CD4-positive, alpha-beta T cell (primary cell): ENCODE measurements at regions of chr5 and their contacts with region 1.

Region 1: DNA sequence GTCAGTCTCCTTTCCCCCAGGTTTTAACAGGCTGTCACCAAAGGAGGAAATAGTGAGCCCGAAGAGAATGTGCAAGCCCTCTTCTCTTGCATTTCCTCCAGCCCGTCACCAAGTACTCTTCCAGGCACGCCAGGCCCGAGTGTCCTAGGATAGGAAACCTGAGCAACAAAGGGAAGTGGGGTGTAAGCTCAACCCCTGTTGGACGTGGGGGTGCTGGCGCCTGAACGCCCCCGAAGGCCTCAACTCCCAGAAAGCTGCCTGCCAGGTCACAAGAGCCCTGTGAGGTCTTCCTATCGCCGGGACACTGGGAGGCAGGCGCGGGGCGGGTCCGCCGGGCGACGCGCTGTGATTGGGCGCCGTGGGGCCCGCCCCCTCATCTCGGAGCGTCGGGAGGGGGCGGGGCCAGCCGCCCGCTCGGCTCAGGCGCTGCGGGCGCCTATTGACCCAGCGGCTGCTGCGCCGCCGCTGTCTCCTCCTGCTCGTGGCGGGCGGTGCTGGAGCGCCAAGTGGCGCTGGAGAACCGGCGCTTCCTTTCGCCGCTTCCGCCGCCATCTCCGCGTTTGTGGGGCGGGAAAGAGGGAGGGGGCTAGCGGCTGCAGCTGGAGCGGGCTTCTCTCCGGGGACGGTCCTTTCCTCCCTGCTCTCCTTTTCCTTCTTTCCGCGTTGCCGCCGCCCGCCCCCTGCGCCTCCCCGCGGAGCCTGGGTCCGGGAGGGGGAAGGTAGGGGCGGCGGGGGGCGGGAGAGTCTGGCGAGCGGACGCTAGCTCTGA is 572 bp upstream of the MAN2A1 start:
- DNase-seq: peak; percentile 49 to 95 (median 72)
- ATAC-seq: peak; percentile 70
- H3K4me3 ChIP-seq: peak overlapping the region; percentile 92
- H3K4me3 Mint-ChIP-seq: peak overlapping the region; percentile 91
- H3K27ac ChIP-seq: peak overlapping the region; percentile 87 to 92
- H3K27ac Mint-ChIP-seq: peak overlapping the region; percentile 84
- H3K4me1 ChIP-seq: peaks cover 20% of the 10 kb centered on the region
- H3K4me1 Mint-ChIP-seq: peaks cover 35% of the 10 kb centered on the region
- H3K27me3 ChIP-seq: no peaks in the 10 kb centered on the region
- H3K27me3 Mint-ChIP-seq: no peaks in the 10 kb centered on the region
- CTCF ChIP-seq: no peak

Region 2: DNA sequence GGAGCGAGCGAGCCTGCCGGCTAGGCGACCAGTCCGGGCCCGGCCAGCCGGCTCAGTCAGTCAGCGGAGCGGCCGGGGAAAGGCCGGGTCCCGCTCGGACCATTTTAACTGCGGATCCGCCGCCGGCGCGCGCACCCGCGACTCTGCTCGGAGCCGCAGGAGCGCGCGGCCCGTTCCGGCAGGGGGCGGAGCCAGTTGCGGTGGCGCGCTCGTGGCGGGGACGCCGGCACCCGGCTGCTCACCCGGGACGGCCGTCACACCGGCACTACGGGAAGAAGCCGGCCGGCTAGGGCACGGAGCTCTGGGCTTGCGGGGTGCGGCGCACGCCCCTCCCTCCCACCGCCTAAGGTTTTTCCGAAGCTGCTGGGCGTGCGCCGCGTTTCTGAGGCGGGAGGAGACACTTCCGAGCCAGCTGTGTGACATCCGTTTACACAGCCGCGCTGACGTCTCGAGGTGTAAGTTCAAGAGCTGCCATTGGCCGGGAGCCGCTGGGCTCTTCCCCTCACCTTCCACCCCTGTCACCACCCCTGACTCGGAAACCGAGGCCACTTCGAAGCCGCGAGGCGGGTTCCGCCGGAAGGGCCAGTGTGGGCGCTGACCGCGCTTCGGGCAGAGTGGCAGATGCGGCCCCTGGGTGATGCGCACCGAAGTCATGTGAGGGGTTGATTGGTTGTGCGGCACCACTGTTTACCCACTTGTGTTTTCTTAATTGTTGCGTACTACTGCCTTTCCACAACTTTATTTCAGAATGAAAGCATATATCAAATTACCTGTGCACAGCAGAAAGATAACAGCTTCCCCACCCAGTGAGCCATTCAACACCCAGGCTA is 1307.0 kb before region 1 on chr5 and contains the start of gene FBXL17:
- CTCF ChIA-PET with region 1: no interaction called
- POLR2A ChIA-PET with region 1: interaction called, 25 read pairs
- intact Hi-C with region 1: loop called (anchors 2 to 10 kb)
- DNase-seq: peak; percentile 83 to 97 (median 87)
- ATAC-seq: peak; percentile 76
- H3K4me3 ChIP-seq: peak within 1 kb of the TSS; percentile 63
- H3K4me3 Mint-ChIP-seq: peak within 1 kb of the TSS; percentile 90
- H3K27ac ChIP-seq: peak within 1 kb of the TSS; percentile 88 to 98
- H3K27ac Mint-ChIP-seq: peak within 1 kb of the TSS; percentile 94
- H3K4me1 ChIP-seq: peaks cover 13% of the 10 kb centered on the region
- H3K4me1 Mint-ChIP-seq: peaks cover 47% of the 10 kb centered on the region
- H3K27me3 ChIP-seq: no peaks in the 10 kb centered on the region
- H3K27me3 Mint-ChIP-seq: no peaks in the 10 kb centered on the region
- CTCF ChIP-seq: no peak
- total RNA-seq, gene FBXL17: 17.9 to 21.1 TPM

Region 3: DNA sequence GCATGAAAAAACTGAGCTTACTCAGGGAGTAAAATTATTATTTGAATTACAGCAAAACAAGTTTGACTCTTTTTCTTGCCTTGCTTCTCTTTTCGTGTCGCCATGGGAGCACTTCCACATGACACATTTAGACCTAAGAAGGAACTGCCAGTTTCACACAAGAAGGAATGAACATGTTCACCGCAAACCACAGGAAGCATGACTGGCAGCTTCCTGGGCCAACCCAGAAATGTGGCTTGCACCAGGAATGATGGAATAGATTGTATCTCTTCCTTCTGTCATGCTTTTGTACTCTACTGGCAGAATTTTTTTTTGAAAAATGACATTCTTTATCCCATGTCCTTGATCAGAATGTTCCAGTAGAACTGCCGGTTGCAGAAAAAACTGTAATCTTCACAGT is 32.3 kb before region 1 on chr5:
- CTCF ChIA-PET with region 1: no interaction called
- POLR2A ChIA-PET with region 1: interaction called, 10 read pairs
- intact Hi-C with region 1: no loop called
- DNase-seq: peak in 11 of 14 experiments; percentile 5 to 79 (median 35)
- ATAC-seq: peak; percentile 89
- H3K4me3 ChIP-seq: no peak overlapping the region
- H3K4me3 Mint-ChIP-seq: peak overlapping the region; percentile 16
- H3K27ac ChIP-seq: no peak overlapping the region
- H3K27ac Mint-ChIP-seq: peak overlapping the region; percentile 13
- H3K4me1 ChIP-seq: peaks cover 7% of the 10 kb centered on the region
- H3K4me1 Mint-ChIP-seq: peaks cover 20% of the 10 kb centered on the region
- H3K27me3 ChIP-seq: no peaks in the 10 kb centered on the region
- H3K27me3 Mint-ChIP-seq: peaks cover 26% of the 10 kb centered on the region
- CTCF ChIP-seq: no peak

Region 4: DNA sequence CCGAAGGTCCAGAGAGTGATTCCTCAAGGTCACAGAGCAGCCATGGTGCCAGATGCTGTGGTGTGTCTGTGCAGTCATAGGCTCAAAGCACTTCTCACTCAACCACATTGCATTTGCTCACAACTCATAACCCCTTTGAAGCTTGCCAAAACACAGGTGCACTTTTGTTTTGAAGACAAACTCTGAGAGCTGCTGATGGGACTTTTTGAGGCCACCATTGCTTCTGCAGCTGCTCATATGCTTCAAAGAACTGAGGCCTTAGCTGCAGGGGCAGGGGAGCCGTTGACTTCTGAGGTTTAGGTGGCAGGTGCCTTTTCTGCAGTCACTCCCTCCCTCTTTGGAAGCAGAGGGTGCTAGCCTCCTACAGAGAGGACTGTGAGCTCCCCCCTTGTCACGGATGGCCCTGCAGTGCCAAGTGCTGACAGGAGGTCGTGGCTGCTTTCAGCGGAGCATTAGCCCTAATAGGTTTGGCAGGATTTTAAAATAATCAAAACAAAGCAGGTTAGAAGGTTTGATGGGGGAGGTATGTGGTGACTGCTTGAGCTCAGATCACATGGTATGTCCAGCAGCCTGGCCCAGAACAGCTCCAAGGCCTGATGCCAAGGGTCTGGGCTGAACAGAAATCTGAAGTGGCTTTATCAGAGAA is 232.7 kb after region 1 on chr5:
- CTCF ChIA-PET with region 1: no interaction called
- POLR2A ChIA-PET with region 1: interaction called, 70 read pairs
- intact Hi-C with region 1: loop called (anchors 2 to 10 kb)
- DNase-seq: peak; percentile 38 to 91 (median 68)
- ATAC-seq: peak; percentile 89
- H3K4me3 ChIP-seq: peak overlapping the region; percentile 13
- H3K4me3 Mint-ChIP-seq: peak overlapping the region; percentile 79
- H3K27ac ChIP-seq: peak overlapping the region; percentile 60 to 73
- H3K27ac Mint-ChIP-seq: peak overlapping the region; percentile 94
- H3K4me1 ChIP-seq: peaks cover 36% of the 10 kb centered on the region
- H3K4me1 Mint-ChIP-seq: peaks cover 66% of the 10 kb centered on the region
- H3K27me3 ChIP-seq: no peaks in the 10 kb centered on the region
- H3K27me3 Mint-ChIP-seq: no peaks in the 10 kb centered on the region
- CTCF ChIP-seq: no peak

Region 5: GRCh38 chr5:110625376-110625999 is 936.3 kb after region 1 on chr5:
- CTCF ChIA-PET with region 1: no interaction called
- POLR2A ChIA-PET with region 1: interaction called, 4 read pairs
- intact Hi-C with region 1: loop called (anchors 1 to 2 kb)
- DNase-seq: peak in 3 of 14 experiments; percentile 27 to 37 (median 28)
- ATAC-seq: no peak
- H3K4me3 ChIP-seq: no peak overlapping the region
- H3K4me3 Mint-ChIP-seq: no peak overlapping the region
- H3K27ac ChIP-seq: no peak overlapping the region
- H3K27ac Mint-ChIP-seq: no peak overlapping the region
- H3K4me1 ChIP-seq: no peaks in the 10 kb centered on the region
- H3K4me1 Mint-ChIP-seq: no peaks in the 10 kb centered on the region
- H3K27me3 ChIP-seq: no peaks in the 10 kb centered on the region
- H3K27me3 Mint-ChIP-seq: peaks cover 6% of the 10 kb centered on the region
- CTCF ChIP-seq: peak; percentile 64

Region 6: DNA sequence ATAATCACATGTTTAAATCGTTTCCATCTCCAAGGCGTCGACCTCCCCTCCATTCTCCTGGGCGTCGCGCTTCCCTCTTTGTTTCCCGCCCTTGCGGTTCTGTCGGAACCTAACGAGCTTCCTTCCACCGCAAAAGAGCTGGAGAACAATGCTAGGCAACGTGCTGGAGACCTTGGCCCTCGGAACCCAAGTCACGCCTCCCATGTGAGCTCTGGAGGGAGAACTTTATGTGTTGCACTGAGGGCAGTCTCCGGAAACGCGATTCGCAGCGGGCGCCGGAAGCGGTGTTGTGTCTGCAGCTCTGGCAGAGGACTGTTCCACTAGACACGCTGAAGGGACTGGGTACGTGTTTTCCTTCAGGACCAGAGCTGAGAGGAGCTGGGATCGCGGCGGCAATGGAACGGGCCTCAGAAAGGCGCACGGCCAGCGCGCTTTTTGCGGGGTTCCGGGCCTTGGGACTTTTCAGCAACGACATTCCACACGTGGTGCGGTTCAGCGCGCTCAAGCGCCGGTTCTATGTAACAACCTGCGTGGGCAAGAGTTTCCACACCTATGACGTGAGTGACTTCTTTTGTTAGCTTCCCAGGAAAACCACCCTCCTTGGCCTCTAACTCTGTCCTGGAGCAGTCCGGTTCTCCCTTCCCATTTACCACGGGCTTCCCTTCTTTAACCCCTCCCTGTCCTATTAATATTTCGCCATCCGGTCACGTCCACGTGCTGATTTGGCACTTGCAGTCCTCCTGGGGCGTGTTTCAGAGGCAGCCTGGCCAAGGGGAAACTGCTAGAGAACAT is 1403.1 kb after region 1 on chr5 and contains the start of gene WDR36:
- CTCF ChIA-PET with region 1: no interaction called
- POLR2A ChIA-PET with region 1: no interaction called
- intact Hi-C with region 1: loop called in 1 of 2 experiments (anchors 10 kb)
- DNase-seq: peak; percentile 78 to 93 (median 86)
- ATAC-seq: peak; percentile 93
- H3K4me3 ChIP-seq: peak within 1 kb of the TSS; percentile 89
- H3K4me3 Mint-ChIP-seq: peak within 1 kb of the TSS; percentile 90
- H3K27ac ChIP-seq: peak within 1 kb of the TSS; percentile 68 to 85
- H3K27ac Mint-ChIP-seq: peak within 1 kb of the TSS; percentile 94
- H3K4me1 ChIP-seq: peaks cover 9% of the 10 kb centered on the region
- H3K4me1 Mint-ChIP-seq: peaks cover 41% of the 10 kb centered on the region
- H3K27me3 ChIP-seq: no peaks in the 10 kb centered on the region
- H3K27me3 Mint-ChIP-seq: peaks cover 9% of the 10 kb centered on the region
- CTCF ChIP-seq: no peak
- total RNA-seq, gene WDR36: 22.0 to 22.4 TPM